CD8-positive, alpha-beta T cell (primary cell): ENCODE measurements at regions of chr6 and their contacts with region 1.

Region 1: DNA sequence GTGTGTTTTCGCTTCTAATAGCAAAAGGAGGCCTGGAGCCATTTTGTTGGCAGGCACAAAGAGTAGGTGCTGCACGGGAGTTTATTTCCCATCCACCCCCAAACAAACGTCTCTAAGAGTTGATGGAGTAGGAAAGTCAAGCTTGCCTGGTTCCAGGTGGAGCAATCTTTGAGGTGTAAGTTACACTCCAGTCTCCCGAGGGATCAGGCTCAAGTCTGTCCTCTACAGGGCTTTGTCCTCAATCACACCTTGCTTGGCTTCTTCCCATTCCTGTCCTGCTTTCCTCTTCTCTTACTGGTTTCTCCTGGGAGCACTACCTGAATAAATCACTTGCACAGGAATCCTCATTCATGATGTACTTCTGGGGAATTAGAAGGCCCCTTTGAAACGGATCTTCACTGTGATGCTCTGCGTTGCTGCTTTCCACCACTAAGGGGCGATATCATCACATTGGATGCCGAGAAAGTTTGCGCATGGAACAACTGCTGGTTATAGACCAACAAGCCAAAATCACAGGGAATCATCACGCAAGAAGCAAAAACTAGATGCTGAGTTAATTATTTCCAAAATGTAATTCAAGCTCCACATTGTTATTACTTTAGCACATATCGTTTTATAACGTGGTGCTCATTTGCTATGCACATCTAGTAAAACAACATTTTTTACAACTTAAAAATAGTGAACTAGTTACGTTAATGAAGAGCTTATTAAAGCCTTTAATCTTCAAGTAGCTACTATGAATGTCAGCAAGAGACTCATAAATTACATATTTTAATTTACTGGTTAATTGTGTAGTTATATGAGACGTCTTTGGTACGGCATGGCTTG is 156.8 kb downstream of the DNAH8 start:
- DNase-seq: peak; percentile 7 to 71 (median 46)
- ATAC-seq: peak; percentile 65
- H3K4me3 ChIP-seq: no peak overlapping the region
- H3K4me3 Mint-ChIP-seq: no peak overlapping the region
- H3K27ac ChIP-seq: no peak overlapping the region
- H3K27ac Mint-ChIP-seq: no peak overlapping the region
- H3K4me1 ChIP-seq: peaks cover 23% of the 10 kb centered on the region
- H3K4me1 Mint-ChIP-seq: peaks cover 26% of the 10 kb centered on the region
- H3K27me3 ChIP-seq: no peaks in the 10 kb centered on the region
- H3K27me3 Mint-ChIP-seq: peaks cover 5% of the 10 kb centered on the region
- CTCF ChIP-seq: peak; percentile 91

Region 2: GRCh38 chr6:38773338-38773737 is 98.6 kb before region 1 on chr6:
- CTCF ChIA-PET with region 1: no interaction called
- POLR2A ChIA-PET with region 1: no interaction called
- intact Hi-C with region 1: no loop called
- DNase-seq: peak in 2 of 9 experiments; percentile 13 to 21
- ATAC-seq: no peak
- H3K4me3 ChIP-seq: no peak overlapping the region
- H3K4me3 Mint-ChIP-seq: no peak overlapping the region
- H3K27ac ChIP-seq: no peak overlapping the region
- H3K27ac Mint-ChIP-seq: no peak overlapping the region
- H3K4me1 ChIP-seq: no peaks in the 10 kb centered on the region
- H3K4me1 Mint-ChIP-seq: no peaks in the 10 kb centered on the region
- H3K27me3 ChIP-seq: no peaks in the 10 kb centered on the region
- H3K27me3 Mint-ChIP-seq: peaks cover 13% of the 10 kb centered on the region
- CTCF ChIP-seq: no peak

Region 3: GRCh38 chr6:38882157-38882556 is 10.2 kb after region 1 on chr6:
- CTCF ChIA-PET with region 1: interaction called, 10 read pairs
- POLR2A ChIA-PET with region 1: no interaction called
- intact Hi-C with region 1: no loop called
- DNase-seq: no peak
- ATAC-seq: no peak
- H3K4me3 ChIP-seq: no peak overlapping the region
- H3K4me3 Mint-ChIP-seq: no peak overlapping the region
- H3K27ac ChIP-seq: no peak overlapping the region
- H3K27ac Mint-ChIP-seq: no peak overlapping the region
- H3K4me1 ChIP-seq: peaks cover 4% of the 10 kb centered on the region
- H3K4me1 Mint-ChIP-seq: peaks cover 3% of the 10 kb centered on the region
- H3K27me3 ChIP-seq: no peaks in the 10 kb centered on the region
- H3K27me3 Mint-ChIP-seq: peaks cover 2% of the 10 kb centered on the region
- CTCF ChIP-seq: no peak

Region 4: DNA sequence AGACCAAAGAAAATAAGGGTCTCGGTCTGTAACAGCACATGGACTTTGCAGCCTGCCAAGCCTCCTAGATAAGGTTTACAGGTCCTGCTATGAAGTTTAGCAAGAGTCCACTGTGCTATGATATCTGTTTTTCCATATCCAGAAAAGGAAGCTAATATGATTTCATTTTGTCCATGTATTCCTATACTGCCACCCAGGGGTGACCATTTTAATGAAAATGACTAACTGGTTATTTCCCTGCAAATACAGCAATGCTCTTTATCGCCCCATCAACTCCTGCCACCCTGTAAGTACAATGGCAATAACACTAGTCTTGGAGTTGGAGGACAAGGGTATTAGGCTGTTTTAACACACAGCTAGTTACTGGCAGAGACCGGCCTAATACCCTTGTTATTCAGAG is 61.5 kb after region 1 on chr6:
- CTCF ChIA-PET with region 1: interaction called, 25 read pairs
- POLR2A ChIA-PET with region 1: no interaction called
- intact Hi-C with region 1: loop called (anchors 2 kb)
- DNase-seq: peak in 2 of 9 experiments; percentile 23 to 36
- ATAC-seq: no peak
- H3K4me3 ChIP-seq: no peak overlapping the region
- H3K4me3 Mint-ChIP-seq: no peak overlapping the region
- H3K27ac ChIP-seq: no peak overlapping the region
- H3K27ac Mint-ChIP-seq: no peak overlapping the region
- H3K4me1 ChIP-seq: no peaks in the 10 kb centered on the region
- H3K4me1 Mint-ChIP-seq: no peaks in the 10 kb centered on the region
- H3K27me3 ChIP-seq: no peaks in the 10 kb centered on the region
- H3K27me3 Mint-ChIP-seq: peaks cover 17% of the 10 kb centered on the region
- CTCF ChIP-seq: no peak

Region 5: DNA sequence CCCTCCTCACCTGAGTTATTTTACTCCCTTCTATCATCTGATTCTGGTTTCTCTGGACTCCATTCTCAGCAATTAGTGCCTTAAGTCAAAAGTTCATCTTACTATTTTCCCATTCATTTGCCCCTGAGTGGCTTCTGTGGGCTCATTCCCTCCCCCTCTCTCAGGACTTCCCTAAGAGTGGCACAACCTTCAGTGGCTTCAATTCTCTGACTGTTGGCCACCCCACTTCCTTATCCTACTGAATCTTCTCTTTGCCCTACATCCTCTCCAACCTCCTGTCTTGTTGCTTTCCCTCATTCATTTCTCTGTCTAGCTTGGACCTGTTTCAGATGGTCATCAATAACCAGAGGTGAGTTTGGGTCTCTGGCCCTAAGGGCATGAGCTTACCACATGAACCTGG is 115.5 kb after region 1 on chr6:
- CTCF ChIA-PET with region 1: no interaction called
- POLR2A ChIA-PET with region 1: no interaction called
- intact Hi-C with region 1: no loop called
- DNase-seq: no peak
- ATAC-seq: no peak
- H3K4me3 ChIP-seq: no peak overlapping the region
- H3K4me3 Mint-ChIP-seq: no peak overlapping the region
- H3K27ac ChIP-seq: no peak overlapping the region
- H3K27ac Mint-ChIP-seq: no peak overlapping the region
- H3K4me1 ChIP-seq: no peaks in the 10 kb centered on the region
- H3K4me1 Mint-ChIP-seq: no peaks in the 10 kb centered on the region
- H3K27me3 ChIP-seq: no peaks in the 10 kb centered on the region
- H3K27me3 Mint-ChIP-seq: peaks cover 20% of the 10 kb centered on the region
- CTCF ChIP-seq: no peak

Region 6: GRCh38 chr6:39102071-39102820 is 230.3 kb after region 1 on chr6:
- CTCF ChIA-PET with region 1: interaction called, 5 read pairs
- POLR2A ChIA-PET with region 1: no interaction called
- intact Hi-C with region 1: loop called in 1 of 2 experiments (anchors 10 kb)
- DNase-seq: peak in 2 of 9 experiments; percentile 20 to 36
- ATAC-seq: no peak
- H3K4me3 ChIP-seq: no peak overlapping the region
- H3K4me3 Mint-ChIP-seq: no peak overlapping the region
- H3K27ac ChIP-seq: no peak overlapping the region
- H3K27ac Mint-ChIP-seq: no peak overlapping the region
- H3K4me1 ChIP-seq: peaks cover 14% of the 10 kb centered on the region
- H3K4me1 Mint-ChIP-seq: peaks cover 22% of the 10 kb centered on the region
- H3K27me3 ChIP-seq: no peaks in the 10 kb centered on the region
- H3K27me3 Mint-ChIP-seq: no peaks in the 10 kb centered on the region
- CTCF ChIP-seq: no peak

Region 7: DNA sequence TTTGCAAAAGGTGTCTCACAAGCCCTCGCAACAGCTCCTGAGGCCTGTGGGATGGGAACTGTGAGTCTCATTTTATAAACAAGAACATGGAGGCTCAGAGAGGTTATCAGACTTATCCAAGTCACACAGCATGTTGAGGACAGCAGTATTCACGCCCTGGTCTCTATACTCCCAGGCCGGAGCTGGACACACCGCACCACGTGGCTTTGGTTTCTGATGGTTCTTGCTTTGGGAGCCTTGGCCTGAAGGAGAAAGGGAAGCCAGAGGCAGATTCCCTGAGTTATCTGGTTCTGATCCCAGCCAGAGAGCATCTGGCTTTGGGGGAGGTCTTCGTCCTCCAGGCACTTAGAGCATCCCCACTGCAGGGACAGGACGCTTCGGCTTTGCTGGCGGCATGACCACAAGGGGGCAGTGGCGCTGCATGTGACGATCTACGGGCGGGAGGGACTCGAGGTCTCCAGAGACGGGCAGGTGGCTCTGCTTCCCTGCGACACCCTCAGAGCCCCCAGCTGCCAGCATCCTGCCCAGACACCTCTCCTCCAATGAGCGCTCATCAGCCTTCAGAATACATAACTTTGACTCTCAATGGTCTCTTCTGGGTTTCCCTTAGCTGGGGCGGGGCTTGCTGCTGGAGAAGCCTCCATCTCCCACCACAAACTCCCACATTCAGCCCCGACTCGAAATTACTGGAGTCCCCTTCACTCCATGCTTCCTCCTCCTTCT is 294.4 kb after region 1 on chr6:
- CTCF ChIA-PET with region 1: interaction called, 4 read pairs
- POLR2A ChIA-PET with region 1: no interaction called
- intact Hi-C with region 1: loop called (anchors 1 to 5 kb)
- DNase-seq: peak; percentile 67 to 90 (median 82)
- ATAC-seq: peak; percentile 75
- H3K4me3 ChIP-seq: no peak overlapping the region
- H3K4me3 Mint-ChIP-seq: no peak overlapping the region
- H3K27ac ChIP-seq: no peak overlapping the region
- H3K27ac Mint-ChIP-seq: no peak overlapping the region
- H3K4me1 ChIP-seq: no peaks in the 10 kb centered on the region
- H3K4me1 Mint-ChIP-seq: peaks cover 3% of the 10 kb centered on the region
- H3K27me3 ChIP-seq: no peaks in the 10 kb centered on the region
- H3K27me3 Mint-ChIP-seq: peaks cover 3% of the 10 kb centered on the region
- CTCF ChIP-seq: peak; percentile 83

Region 8: GRCh38 chr6:39309942-39310531 is 438.1 kb after region 1 on chr6:
- CTCF ChIA-PET with region 1: interaction called, 111 read pairs
- POLR2A ChIA-PET with region 1: interaction called, 4 read pairs
- intact Hi-C with region 1: loop called (anchors 1 kb)
- DNase-seq: peak in 8 of 9 experiments; percentile 14 to 67 (median 50)
- ATAC-seq: peak; percentile 51
- H3K4me3 ChIP-seq: no peak overlapping the region
- H3K4me3 Mint-ChIP-seq: no peak overlapping the region
- H3K27ac ChIP-seq: no peak overlapping the region
- H3K27ac Mint-ChIP-seq: no peak overlapping the region
- H3K4me1 ChIP-seq: no peaks in the 10 kb centered on the region
- H3K4me1 Mint-ChIP-seq: peaks cover 3% of the 10 kb centered on the region
- H3K27me3 ChIP-seq: peaks cover 0 to 13% of the 10 kb centered on the region in 2 experiments
- H3K27me3 Mint-ChIP-seq: peaks cover 24% of the 10 kb centered on the region
- CTCF ChIP-seq: peak; percentile 74